A549 (cell line): ENCODE measurements at regions of chr20 and their contacts with region 1.

Region 1: DNA sequence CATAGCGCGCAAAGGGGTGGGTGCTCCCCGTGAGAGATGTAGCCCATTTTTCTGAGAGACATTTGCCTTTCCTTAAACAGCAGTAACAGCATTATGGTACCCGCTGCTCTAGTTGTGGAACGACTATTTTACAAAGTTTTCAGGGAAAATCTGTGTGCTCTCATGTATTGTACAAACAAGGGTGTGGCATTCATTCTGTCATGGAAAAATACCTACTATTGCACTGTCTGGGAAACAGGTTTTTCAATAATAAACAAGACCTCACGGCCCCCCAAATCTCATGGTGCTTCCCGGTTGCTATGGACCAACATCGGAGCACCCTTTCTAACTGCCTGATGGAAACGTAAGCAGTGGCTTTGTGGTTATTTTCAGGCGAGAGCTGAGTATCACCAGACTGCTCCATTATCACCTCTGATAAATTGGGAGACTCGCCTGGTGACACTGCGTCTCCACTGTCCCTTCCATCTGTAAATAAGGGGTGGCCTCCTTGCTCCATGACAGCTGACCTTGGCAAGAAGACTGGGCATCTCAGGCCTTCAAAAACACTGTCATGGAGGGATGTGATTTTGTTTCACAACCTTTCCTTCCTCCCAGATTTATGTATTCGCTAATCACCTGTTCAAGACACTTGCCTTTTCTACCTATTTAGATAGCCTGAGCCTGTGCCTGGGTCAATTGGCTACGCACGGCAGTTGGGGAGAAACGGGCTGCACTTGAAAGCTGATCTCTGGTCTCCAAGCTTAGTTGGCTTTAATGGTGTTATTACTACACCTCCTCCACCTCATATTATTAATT is 17.9 kb upstream of the CDH4 start:
- DNase-seq: no peak
- ATAC-seq: no peak
- H3K4me3 ChIP-seq: no peak overlapping the region
- H3K27ac ChIP-seq: no peak overlapping the region
- H3K4me1 ChIP-seq: no peaks in the 10 kb centered on the region
- CTCF ChIP-seq: no peak
- EP300 ChIP-seq: no peak
- POLR2A ChIP-seq: no peak
- RAD21 ChIP-seq: no peak

Region 2: GRCh38 chr20:61154217-61154616 is 80.0 kb before region 1 on chr20:
- CTCF ChIA-PET with region 1: interaction called, 12 read pairs
- POLR2A ChIA-PET with region 1: no interaction called
- DNase-seq: no peak
- ATAC-seq: peak in 1 of 2 experiments; percentile 24; a peak in 1 of 6 replicates
- H3K4me3 ChIP-seq: no peak overlapping the region
- H3K27ac ChIP-seq: no peak overlapping the region
- H3K4me1 ChIP-seq: no peaks in the 10 kb centered on the region
- CTCF ChIP-seq: no peak
- EP300 ChIP-seq: no peak
- POLR2A ChIP-seq: no peak
- RAD21 ChIP-seq: no peak

Region 3: DNA sequence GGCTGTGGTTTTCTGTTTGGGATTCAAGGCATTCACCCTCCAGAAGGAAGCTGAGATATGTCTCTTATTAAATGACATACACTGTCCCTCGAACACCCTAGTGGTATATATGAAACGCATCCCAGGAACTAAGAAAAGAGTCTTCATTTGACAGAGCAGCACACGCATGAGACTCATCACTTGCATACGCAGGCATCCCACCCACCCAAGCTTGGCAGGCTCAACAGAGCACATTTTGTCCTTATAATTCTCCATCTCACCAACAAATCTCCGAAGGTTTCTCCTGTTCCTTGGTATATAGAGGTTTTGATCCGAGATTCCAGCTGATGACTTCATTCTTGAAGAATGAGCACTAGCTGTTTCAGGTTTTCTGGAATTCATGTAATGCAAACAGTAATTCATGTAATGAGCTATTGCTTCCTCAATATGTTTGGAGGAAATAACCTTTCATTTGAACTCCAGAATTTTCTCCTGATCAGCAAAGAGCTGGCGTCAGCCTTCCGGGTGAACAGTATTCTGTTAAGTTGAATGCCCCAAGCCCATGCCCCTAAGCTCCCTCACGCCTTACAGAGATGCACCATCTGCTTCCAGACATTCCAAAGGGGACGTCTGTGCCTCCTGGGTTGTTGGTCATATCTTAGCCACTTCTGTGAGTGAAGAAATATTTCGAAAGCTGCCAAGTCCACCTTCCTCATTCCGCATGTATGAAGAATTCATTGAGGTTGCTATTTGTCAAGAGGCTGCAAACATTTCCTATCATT is 48.2 kb before region 1 on chr20:
- CTCF ChIA-PET with region 1: interaction called, 17 read pairs
- POLR2A ChIA-PET with region 1: no interaction called
- DNase-seq: peak; percentile 66 to 85
- ATAC-seq: peak; percentile 95 to 96
- H3K4me3 ChIP-seq: no peak overlapping the region
- H3K27ac ChIP-seq: peak overlapping the region; percentile 81 to 87
- H3K4me1 ChIP-seq: peaks cover 39% of the 10 kb centered on the region
- CTCF ChIP-seq: no peak
- EP300 ChIP-seq: peak; percentile 57 to 82; a peak in 2 of 5 replicates
- POLR2A ChIP-seq: no peak
- RAD21 ChIP-seq: no peak; a peak in 1 of 5 replicates

Region 4: GRCh38 chr20:61219021-61219431 is 15.2 kb before region 1 on chr20:
- CTCF ChIA-PET with region 1: interaction called, 49 read pairs
- POLR2A ChIA-PET with region 1: no interaction called
- DNase-seq: no peak
- ATAC-seq: no peak
- H3K4me3 ChIP-seq: no peak overlapping the region
- H3K27ac ChIP-seq: no peak overlapping the region
- H3K4me1 ChIP-seq: peaks cover 4% of the 10 kb centered on the region; the same call in 1 of the 3 replicates
- CTCF ChIP-seq: no peak
- EP300 ChIP-seq: no peak
- POLR2A ChIP-seq: no peak
- RAD21 ChIP-seq: no peak

Region 5: GRCh38 chr20:61271312-61272221 is 37.4 kb after region 1 on chr20:
- CTCF ChIA-PET with region 1: no interaction called
- POLR2A ChIA-PET with region 1: no interaction called
- DNase-seq: no peak
- ATAC-seq: no peak; a peak in 1 of 6 replicates
- H3K4me3 ChIP-seq: no peak overlapping the region
- H3K27ac ChIP-seq: no peak overlapping the region
- H3K4me1 ChIP-seq: no peaks in the 10 kb centered on the region
- CTCF ChIP-seq: no peak
- EP300 ChIP-seq: no peak
- POLR2A ChIP-seq: no peak
- RAD21 ChIP-seq: no peak

Region 6: GRCh38 chr20:61288331-61288784 is 54.2 kb after region 1 on chr20:
- CTCF ChIA-PET with region 1: no interaction called
- POLR2A ChIA-PET with region 1: no interaction called
- DNase-seq: no peak
- ATAC-seq: no peak
- H3K4me3 ChIP-seq: no peak overlapping the region
- H3K27ac ChIP-seq: no peak overlapping the region
- H3K4me1 ChIP-seq: no peaks in the 10 kb centered on the region
- CTCF ChIP-seq: no peak
- EP300 ChIP-seq: no peak
- POLR2A ChIP-seq: no peak
- RAD21 ChIP-seq: no peak

Region 7: DNA sequence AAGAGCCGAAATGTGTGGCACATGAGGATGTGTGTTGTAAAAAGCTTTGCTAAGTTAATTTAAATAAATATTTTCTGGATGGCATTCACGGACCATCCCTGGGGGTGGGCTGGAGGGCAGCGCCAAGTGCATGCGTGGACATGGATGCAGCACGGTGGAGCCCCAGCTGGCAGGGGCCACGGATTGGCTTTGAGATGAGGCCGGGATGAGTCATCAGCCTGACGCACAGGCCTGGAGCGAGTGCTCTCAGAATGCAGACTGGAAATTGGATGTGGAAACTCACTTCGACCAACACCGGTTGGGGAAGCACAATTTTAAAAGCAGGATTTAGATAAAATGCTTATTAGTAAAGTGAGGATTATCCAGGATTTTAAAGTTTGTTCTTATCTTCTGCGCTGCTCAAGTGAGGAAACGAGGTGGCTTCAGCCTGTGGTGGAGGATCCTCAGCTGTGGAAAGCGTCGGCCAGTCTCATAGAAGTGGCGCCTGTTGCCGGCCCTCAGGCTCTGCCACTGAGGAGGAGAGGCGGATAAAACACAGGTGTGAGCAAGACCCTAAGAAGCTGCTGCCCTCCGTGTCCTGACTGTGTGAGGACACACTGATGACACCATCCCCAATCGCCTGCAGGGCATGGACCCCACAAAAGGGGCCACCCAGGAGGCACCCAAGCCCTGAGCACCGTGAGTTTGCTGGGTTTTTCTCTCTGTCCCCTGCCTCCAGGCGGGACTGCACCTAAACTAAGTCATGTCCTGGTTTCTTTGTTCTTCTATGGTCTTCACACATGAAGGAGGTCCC is 297.5 kb after region 1 on chr20:
- CTCF ChIA-PET with region 1: no interaction called
- POLR2A ChIA-PET with region 1: no interaction called
- DNase-seq: no peak
- ATAC-seq: peak in 1 of 2 experiments; percentile 45; a peak in 1 of 6 replicates
- H3K4me3 ChIP-seq: no peak overlapping the region
- H3K27ac ChIP-seq: no peak overlapping the region
- H3K4me1 ChIP-seq: no peaks in the 10 kb centered on the region
- CTCF ChIP-seq: no peak
- EP300 ChIP-seq: no peak
- POLR2A ChIP-seq: no peak
- RAD21 ChIP-seq: no peak

Region 8: GRCh38 chr20:61560361-61560853 is 326.2 kb after region 1 on chr20:
- CTCF ChIA-PET with region 1: no interaction called
- POLR2A ChIA-PET with region 1: no interaction called
- DNase-seq: peak in 1 of 2 experiments; percentile 42
- ATAC-seq: peak in 1 of 2 experiments; percentile 55; a peak in 3 of 6 replicates
- H3K4me3 ChIP-seq: no peak overlapping the region
- H3K27ac ChIP-seq: no peak overlapping the region; a peak in 1 of 6 replicates
- H3K4me1 ChIP-seq: peaks cover 20% of the 10 kb centered on the region
- CTCF ChIP-seq: no peak
- EP300 ChIP-seq: no peak
- POLR2A ChIP-seq: no peak
- RAD21 ChIP-seq: peak in 1 of 2 experiments; percentile 24; a peak in 1 of 5 replicates